ENCODE measurements at regions of chr19 and their contacts with region 1.

Region 1: GRCh38 chr19:2782936-2783780 is at the start of gene SGTA:
- DNase-seq: peak; percentile 96
- H3K4me3 Mint-ChIP-seq: peak within 1 kb of the TSS; percentile 98
- H3K27ac Mint-ChIP-seq: peak within 1 kb of the TSS; percentile 89
- H3K4me1 Mint-ChIP-seq: peaks cover 62% of the 10 kb centered on the region
- H3K27me3 Mint-ChIP-seq: no peaks in the 10 kb centered on the region
- total RNA-seq, gene SGTA: 73.4 and 77.8 TPM in 2 replicates

Region 2: GRCh38 chr19:2337329-2338043 is 445.7 kb before region 1 on chr19:
- intact Hi-C with region 1: no loop called
- DNase-seq: no peak
- H3K4me3 Mint-ChIP-seq: no peak overlapping the region
- H3K27ac Mint-ChIP-seq: no peak overlapping the region
- H3K4me1 Mint-ChIP-seq: peaks cover 10% of the 10 kb centered on the region
- H3K27me3 Mint-ChIP-seq: no peaks in the 10 kb centered on the region

Region 3: DNA sequence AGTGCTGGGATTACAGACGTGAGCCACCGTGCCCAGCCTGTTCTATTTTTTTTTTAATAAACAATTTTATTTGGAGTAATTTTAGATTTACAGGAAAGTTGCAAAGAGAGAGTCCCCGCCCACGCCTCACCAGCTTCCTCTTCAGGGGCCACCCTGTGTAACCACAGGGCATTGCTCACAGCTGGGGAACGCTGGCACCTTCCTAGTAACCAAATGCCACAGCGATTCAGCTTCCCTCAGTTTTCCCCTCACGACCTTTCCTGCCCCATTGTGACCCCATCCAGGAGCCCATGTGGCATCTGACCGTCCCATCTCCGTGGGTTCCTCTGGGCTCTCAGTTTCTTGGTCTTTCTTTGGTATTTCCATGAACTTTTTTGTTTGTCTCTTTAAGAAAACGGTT is 164.5 kb before region 1 on chr19:
- intact Hi-C with region 1: loop called (anchors 1 kb)
- DNase-seq: peak; percentile 36
- H3K4me3 Mint-ChIP-seq: peak overlapping the region; percentile 63
- H3K27ac Mint-ChIP-seq: peak overlapping the region; percentile 96
- H3K4me1 Mint-ChIP-seq: peaks cover 64% of the 10 kb centered on the region
- H3K27me3 Mint-ChIP-seq: peaks cover 2% of the 10 kb centered on the region

Region 4: GRCh38 chr19:2820112-2820702 is 37.0 kb after region 1 on chr19:
- intact Hi-C with region 1: loop called (anchors 1 kb)
- DNase-seq: no peak
- H3K4me3 Mint-ChIP-seq: peak overlapping the region; percentile 81
- H3K27ac Mint-ChIP-seq: no peak overlapping the region
- H3K4me1 Mint-ChIP-seq: no peaks in the 10 kb centered on the region
- H3K27me3 Mint-ChIP-seq: no peaks in the 10 kb centered on the region

Region 5: GRCh38 chr19:2960120-2960519 is 177.0 kb after region 1 on chr19:
- intact Hi-C with region 1: no loop called
- DNase-seq: no peak
- H3K4me3 Mint-ChIP-seq: no peak overlapping the region
- H3K27ac Mint-ChIP-seq: no peak overlapping the region
- H3K4me1 Mint-ChIP-seq: peaks cover 6% of the 10 kb centered on the region
- H3K27me3 Mint-ChIP-seq: no peaks in the 10 kb centered on the region

Region 6: DNA sequence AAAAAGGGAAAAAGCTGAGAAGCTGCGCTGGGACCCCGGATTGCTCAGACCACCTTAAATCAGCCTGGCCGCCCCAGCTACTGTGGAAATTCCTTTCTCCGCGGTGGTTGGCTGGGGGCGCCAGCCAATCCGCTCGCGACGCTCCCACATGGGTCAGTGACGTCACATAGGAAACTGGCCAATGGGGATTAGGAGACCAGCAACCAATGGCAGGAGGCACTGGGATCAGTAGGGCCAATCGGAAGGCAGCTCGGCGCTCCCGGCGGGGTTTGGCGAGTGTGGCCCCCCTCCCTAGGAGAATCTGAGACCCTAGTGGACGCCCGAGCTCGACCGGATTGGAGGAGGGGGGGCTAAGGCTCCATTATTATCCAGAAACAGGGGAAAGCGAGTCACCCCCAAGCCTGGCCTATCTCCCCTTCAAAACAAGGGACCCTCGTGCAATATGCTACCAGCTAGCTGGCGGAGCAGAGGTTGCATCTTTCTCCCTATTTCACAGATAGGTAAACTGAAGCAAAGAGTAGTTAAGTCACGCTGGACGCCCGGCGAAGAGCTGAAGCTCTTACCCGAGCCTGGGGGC is 252.5 kb after region 1 on chr19:
- intact Hi-C with region 1: loop called (anchors 1 kb)
- DNase-seq: peak; percentile 95
- H3K4me3 Mint-ChIP-seq: peak overlapping the region; percentile 94
- H3K27ac Mint-ChIP-seq: peak overlapping the region; percentile 98
- H3K4me1 Mint-ChIP-seq: peaks cover 18% of the 10 kb centered on the region
- H3K27me3 Mint-ChIP-seq: peaks cover 23% of the 10 kb centered on the region

Region 7: DNA sequence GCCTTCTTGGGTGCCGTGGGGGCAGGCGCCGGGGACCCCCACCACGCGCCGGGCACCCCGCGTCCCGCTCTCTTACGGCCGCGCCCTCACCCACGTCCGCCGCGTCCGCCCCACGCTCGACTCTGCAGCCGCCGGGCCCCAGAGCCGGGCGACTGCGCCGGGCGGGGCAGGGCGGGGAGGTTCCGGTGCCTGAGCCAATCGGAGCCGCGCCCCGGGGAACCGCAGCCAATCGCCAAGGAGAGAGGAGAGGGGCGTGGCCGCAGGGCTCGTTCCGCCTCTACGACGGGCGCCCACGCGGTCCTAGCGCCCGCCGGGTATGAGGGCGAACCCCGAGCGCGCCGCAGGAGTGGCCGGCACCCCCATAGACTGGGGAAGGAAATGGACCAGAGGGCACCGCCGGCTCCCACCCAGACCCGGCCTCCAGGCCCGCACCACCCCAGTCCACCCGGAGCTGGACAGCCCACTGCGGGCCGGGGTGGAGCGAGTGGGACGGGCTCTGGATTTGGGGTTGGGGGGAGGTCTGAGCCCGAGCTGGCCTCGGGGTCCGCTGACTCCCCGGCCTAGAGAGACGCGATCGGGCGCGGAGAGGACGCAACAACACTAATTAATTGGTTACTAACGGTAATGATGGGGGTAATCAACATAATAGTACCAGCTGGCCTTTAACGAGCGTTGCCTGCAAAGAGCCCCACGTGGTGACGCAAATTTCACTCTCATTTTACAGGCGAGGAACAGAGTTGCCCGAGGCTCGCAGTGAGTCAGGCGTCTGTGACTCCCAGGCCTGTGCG is 774.5 kb after region 1 on chr19 and contains the start of gene MFSD12:
- intact Hi-C with region 1: loop called (anchors 2 kb)
- DNase-seq: peak; percentile 96
- H3K4me3 Mint-ChIP-seq: peak within 1 kb of the TSS; percentile 96
- H3K27ac Mint-ChIP-seq: peak within 1 kb of the TSS; percentile 84
- H3K4me1 Mint-ChIP-seq: peaks cover 32% of the 10 kb centered on the region
- H3K27me3 Mint-ChIP-seq: no peaks in the 10 kb centered on the region
- total RNA-seq, gene MFSD12: 126 and 136 TPM in 2 replicates